Panc1 (cell line): ENCODE measurements at regions of chr12 and their contacts with region 1.

Region 1: GRCh38 chr12:78002878-78003277 is 172.2 kb downstream of the NAV3 start:
- DNase-seq: no peak
- ATAC-seq: no peak
- H3K4me3 ChIP-seq: no peak overlapping the region
- H3K27ac ChIP-seq: no peak overlapping the region
- H3K4me1 ChIP-seq: no peaks in the 10 kb centered on the region
- H3K27me3 ChIP-seq: no peaks in the 10 kb centered on the region
- CTCF ChIP-seq: no peak

Region 2: GRCh38 chr12:77796775-77797174 is 206.1 kb before region 1 on chr12:
- CTCF ChIA-PET with region 1: no interaction called
- POLR2A ChIA-PET with region 1: no interaction called
- in situ Hi-C with region 1: no loop called
- intact Hi-C with region 1: no loop called
- DNase-seq: no peak
- ATAC-seq: no peak
- H3K4me3 ChIP-seq: no peak overlapping the region
- H3K27ac ChIP-seq: no peak overlapping the region
- H3K4me1 ChIP-seq: no peaks in the 10 kb centered on the region
- H3K27me3 ChIP-seq: no peaks in the 10 kb centered on the region
- CTCF ChIP-seq: no peak

Region 3: GRCh38 chr12:78194448-78194847 is 191.6 kb after region 1 on chr12:
- CTCF ChIA-PET with region 1: no interaction called
- POLR2A ChIA-PET with region 1: no interaction called
- in situ Hi-C with region 1: no loop called
- intact Hi-C with region 1: no loop called
- DNase-seq: no peak
- ATAC-seq: no peak
- H3K4me3 ChIP-seq: no peak overlapping the region
- H3K27ac ChIP-seq: no peak overlapping the region
- H3K4me1 ChIP-seq: no peaks in the 10 kb centered on the region
- H3K27me3 ChIP-seq: no peaks in the 10 kb centered on the region
- CTCF ChIP-seq: no peak

Region 4: DNA sequence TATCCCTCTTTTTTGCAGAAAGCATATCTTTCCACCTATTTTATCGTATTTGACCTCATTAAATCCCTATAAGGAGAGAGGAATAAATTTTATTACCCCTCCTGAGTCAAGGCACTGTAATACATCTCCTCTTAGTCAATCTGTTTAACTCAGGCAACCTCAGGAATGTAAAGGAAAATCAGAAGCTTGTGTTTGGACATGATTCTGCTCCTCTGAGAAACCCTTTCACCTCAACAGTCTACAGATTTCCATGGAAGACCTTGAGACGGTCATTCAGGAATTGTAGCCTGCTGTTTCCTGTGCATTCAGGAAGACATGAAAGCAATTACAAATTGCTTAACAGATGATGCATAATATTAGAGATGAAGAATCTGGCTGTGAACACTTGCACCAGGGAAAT is 1327.1 kb after region 1 on chr12:
- CTCF ChIA-PET with region 1: no interaction called
- POLR2A ChIA-PET with region 1: no interaction called
- in situ Hi-C with region 1: no loop called
- intact Hi-C with region 1: loop called (anchors 5 kb)
- DNase-seq: no peak
- ATAC-seq: no peak
- H3K4me3 ChIP-seq: no peak overlapping the region
- H3K27ac ChIP-seq: no peak overlapping the region
- H3K4me1 ChIP-seq: no peaks in the 10 kb centered on the region
- H3K27me3 ChIP-seq: no peaks in the 10 kb centered on the region
- CTCF ChIP-seq: no peak